T-cell (primary cell): ENCODE measurements at regions of chr12 and their contacts with region 1.

Region 1: DNA sequence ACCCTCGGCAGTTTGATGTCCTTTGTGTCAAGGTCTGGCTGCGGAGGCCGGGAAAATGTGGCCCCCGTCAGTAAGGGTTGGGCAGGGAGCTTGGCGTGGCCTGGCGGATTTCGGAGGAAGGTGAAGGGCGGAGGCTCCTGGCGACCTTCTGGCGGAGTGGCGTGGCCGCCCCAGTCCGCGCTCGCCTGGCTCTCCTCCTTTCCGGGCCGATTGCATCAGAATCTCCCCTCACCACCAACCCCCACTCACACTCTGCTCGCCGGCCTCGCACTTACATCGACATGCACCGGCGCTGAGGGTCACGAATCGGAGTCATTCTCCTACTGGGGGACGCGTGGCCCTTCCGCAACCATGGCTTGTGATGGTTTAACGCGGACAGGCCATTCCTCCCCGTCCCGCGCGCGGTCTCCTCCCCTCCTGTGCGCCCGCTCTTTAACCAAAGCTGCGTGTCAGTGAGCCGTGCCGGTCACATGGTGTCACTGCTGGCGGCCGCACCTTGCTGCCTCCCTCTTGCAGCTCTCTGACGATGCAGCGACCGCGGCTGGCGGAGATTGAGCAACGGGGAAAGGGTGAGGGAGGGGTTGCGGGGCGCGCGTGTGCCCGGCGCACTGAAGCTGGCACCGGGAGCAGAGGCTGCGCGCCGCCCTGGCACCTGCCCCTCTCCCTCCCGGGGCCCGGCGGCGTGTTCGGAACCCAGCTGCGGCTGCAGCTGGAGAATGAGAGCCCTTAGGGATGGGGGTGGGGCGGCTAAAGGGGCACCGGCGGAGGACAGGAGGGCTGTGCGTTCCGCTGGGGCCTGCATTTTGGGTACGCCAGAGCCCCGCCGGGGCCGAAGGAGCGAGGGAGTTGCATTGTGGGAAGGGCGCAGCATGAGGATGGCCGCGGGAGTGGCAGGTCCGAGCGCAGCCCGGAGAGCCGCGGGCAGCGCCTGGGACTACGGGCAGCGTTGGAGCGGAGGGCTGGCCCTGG is at the start of gene SLC38A1:
- DNase-seq: peak; percentile 74 to 94 (median 87)
- ATAC-seq: peak; percentile 72 to 77 (median 74)
- H3K4me3 ChIP-seq: peak within 1 kb of the TSS; percentile 94 to 97
- H3K4me3 Mint-ChIP-seq: no peak within 1 kb of the TSS
- H3K27ac ChIP-seq: peak within 1 kb of the TSS; percentile 99
- H3K27ac Mint-ChIP-seq: no peak within 1 kb of the TSS
- H3K4me1 ChIP-seq: peaks cover 22 to 48% of the 10 kb centered on the region in 2 experiments
- H3K4me1 Mint-ChIP-seq: peaks cover 34 to 38% (median 37%) of the 10 kb centered on the region in 3 donors
- H3K27me3 ChIP-seq: no peaks in the 10 kb centered on the region
- H3K27me3 Mint-ChIP-seq: no peaks in the 10 kb centered on the region
- total RNA-seq, gene SLC38A1: 273 to 321 (median 286) TPM

Region 2: GRCh38 chr12:45928309-45928708 is 340.6 kb before region 1 on chr12:
- CTCF ChIA-PET with region 1: no interaction called
- POLR2A ChIA-PET with region 1: no interaction called
- DNase-seq: no peak
- ATAC-seq: no peak
- H3K4me3 ChIP-seq: no peak overlapping the region
- H3K4me3 Mint-ChIP-seq: no peak overlapping the region
- H3K27ac ChIP-seq: no peak overlapping the region
- H3K27ac Mint-ChIP-seq: peak overlapping the region; percentile 66 to 73
- H3K4me1 ChIP-seq: no peaks in the 10 kb centered on the region
- H3K4me1 Mint-ChIP-seq: no peaks in the 10 kb centered on the region
- H3K27me3 ChIP-seq: no peaks in the 10 kb centered on the region
- H3K27me3 Mint-ChIP-seq: no peaks in the 10 kb centered on the region

Region 3: GRCh38 chr12:46217541-46218321 is 51.1 kb before region 1 on chr12:
- CTCF ChIA-PET with region 1: interaction called, 3 to 12 read pairs
- POLR2A ChIA-PET with region 1: interaction called, 9 to 61 read pairs
- DNase-seq: peak in 32 of 35 experiments; percentile 19 to 83 (median 58)
- ATAC-seq: peak; percentile 35 to 56 (median 46)
- H3K4me3 ChIP-seq: peak overlapping the region; percentile 25 to 28
- H3K4me3 Mint-ChIP-seq: peak overlapping the region; percentile 61 to 79 (median 78)
- H3K27ac ChIP-seq: peak overlapping the region; percentile 97
- H3K27ac Mint-ChIP-seq: peak overlapping the region; percentile 98 to 99
- H3K4me1 ChIP-seq: peaks cover 71 to 95% of the 10 kb centered on the region in 2 experiments
- H3K4me1 Mint-ChIP-seq: peaks cover 95 to 99% (median 97%) of the 10 kb centered on the region in 3 donors
- H3K27me3 ChIP-seq: no peaks in the 10 kb centered on the region
- H3K27me3 Mint-ChIP-seq: no peaks in the 10 kb centered on the region

Region 4: DNA sequence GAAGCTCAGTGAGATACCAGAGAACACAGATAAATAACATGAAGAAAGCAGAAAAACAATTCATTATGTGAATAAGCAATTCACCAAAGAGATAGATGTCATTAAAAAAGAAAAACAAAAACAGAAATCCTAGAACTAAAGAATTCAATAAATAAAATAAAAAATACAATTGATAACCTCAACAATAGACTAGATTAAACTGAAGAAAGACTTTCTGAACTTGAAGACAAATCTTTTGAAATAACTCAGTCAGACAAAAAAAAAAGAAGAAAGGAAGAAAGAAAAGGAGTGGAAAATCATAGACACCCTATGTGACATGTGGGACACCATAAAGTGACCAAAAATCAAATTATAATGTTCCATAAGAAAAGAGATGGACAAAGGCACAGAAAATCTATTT is 14.0 kb after region 1 on chr12:
- CTCF ChIA-PET with region 1: no interaction called
- POLR2A ChIA-PET with region 1: interaction called in 1 of 2 experiments, 13 read pairs
- DNase-seq: no peak
- ATAC-seq: no peak
- H3K4me3 ChIP-seq: no peak overlapping the region
- H3K4me3 Mint-ChIP-seq: peak overlapping the region in 1 of 3 donors; percentile 17
- H3K27ac ChIP-seq: no peak overlapping the region
- H3K27ac Mint-ChIP-seq: no peak overlapping the region
- H3K4me1 ChIP-seq: peaks cover 0 to 3% of the 10 kb centered on the region in 2 experiments
- H3K4me1 Mint-ChIP-seq: no peaks in the 10 kb centered on the region
- H3K27me3 ChIP-seq: peaks cover 0 to 4% of the 10 kb centered on the region in 2 experiments
- H3K27me3 Mint-ChIP-seq: no peaks in the 10 kb centered on the region

Region 5: GRCh38 chr12:46303039-46303666 is 34.3 kb after region 1 on chr12:
- CTCF ChIA-PET with region 1: interaction called, 3 to 14 read pairs
- POLR2A ChIA-PET with region 1: no interaction called
- DNase-seq: peak in 34 of 35 experiments; percentile 3 to 86 (median 36)
- ATAC-seq: peak; percentile 78 to 87 (median 81)
- H3K4me3 ChIP-seq: no peak overlapping the region
- H3K4me3 Mint-ChIP-seq: no peak overlapping the region
- H3K27ac ChIP-seq: no peak overlapping the region
- H3K27ac Mint-ChIP-seq: no peak overlapping the region
- H3K4me1 ChIP-seq: no peaks in the 10 kb centered on the region
- H3K4me1 Mint-ChIP-seq: peaks cover 3 to 19% (median 6%) of the 10 kb centered on the region in 3 donors
- H3K27me3 ChIP-seq: no peaks in the 10 kb centered on the region
- H3K27me3 Mint-ChIP-seq: no peaks in the 10 kb centered on the region

Region 6: GRCh38 chr12:47190271-47190750 is 921.4 kb after region 1 on chr12:
- CTCF ChIA-PET with region 1: no interaction called
- POLR2A ChIA-PET with region 1: interaction called in 1 of 2 experiments, 11 read pairs
- DNase-seq: no peak
- ATAC-seq: no peak
- H3K4me3 ChIP-seq: no peak overlapping the region
- H3K4me3 Mint-ChIP-seq: peak overlapping the region in 2 of 3 donors; percentile 34 to 74
- H3K27ac ChIP-seq: peak overlapping the region; percentile 67
- H3K27ac Mint-ChIP-seq: peak overlapping the region; percentile 91 to 99
- H3K4me1 ChIP-seq: peaks cover 41 to 60% of the 10 kb centered on the region in 2 experiments
- H3K4me1 Mint-ChIP-seq: peaks cover 86 to 92% (median 90%) of the 10 kb centered on the region in 3 donors
- H3K27me3 ChIP-seq: no peaks in the 10 kb centered on the region
- H3K27me3 Mint-ChIP-seq: no peaks in the 10 kb centered on the region